ENCODE measurements at regions of chr5 and their contacts with region 1.

Region 1: GRCh38 chr5:73792687-73793320 is 166.8 kb downstream of the ARHGEF28 start:
- DNase-seq: peak; percentile 88
- H3K4me3 Mint-ChIP-seq: no peak overlapping the region
- H3K27ac Mint-ChIP-seq: no peak overlapping the region
- H3K4me1 Mint-ChIP-seq: peaks cover 6% of the 10 kb centered on the region
- H3K27me3 Mint-ChIP-seq: peaks cover 24% of the 10 kb centered on the region

Region 2: DNA sequence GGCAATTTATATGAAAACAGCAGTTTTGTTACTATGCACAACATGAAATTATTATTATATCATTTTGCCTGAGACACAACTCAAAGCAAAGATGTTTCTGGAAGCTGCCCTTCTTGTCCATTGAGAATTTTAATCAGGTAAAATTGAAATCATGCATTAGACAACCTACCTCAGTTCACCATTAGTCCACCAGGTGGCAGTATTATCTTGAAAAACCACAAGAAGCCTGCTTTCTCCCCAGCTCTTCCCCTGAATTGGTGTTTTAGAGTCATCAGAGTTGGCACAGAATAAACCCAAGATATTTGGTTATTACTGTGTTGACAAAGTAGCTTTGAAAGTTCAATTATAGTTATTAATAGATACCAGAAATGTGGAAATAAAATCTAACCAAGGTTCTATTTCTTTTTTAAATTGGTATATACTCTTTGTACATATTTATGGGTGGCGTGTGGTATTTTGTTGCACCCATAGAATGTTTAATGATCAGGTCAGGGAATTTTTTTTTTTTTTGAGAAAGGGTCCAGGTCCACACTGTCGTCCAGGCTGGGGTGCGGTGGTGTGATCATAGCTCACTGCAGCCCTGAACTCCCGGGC is 201.6 kb before region 1 on chr5:
- intact Hi-C with region 1: loop called (anchors 1 kb)
- DNase-seq: peak; percentile 88
- H3K4me3 Mint-ChIP-seq: no peak overlapping the region
- H3K27ac Mint-ChIP-seq: no peak overlapping the region
- H3K4me1 Mint-ChIP-seq: no peaks in the 10 kb centered on the region
- H3K27me3 Mint-ChIP-seq: peaks cover 5% of the 10 kb centered on the region